GM12878 (cell line): ENCODE measurements at regions of chr1 and their contacts with region 1.

Region 1: GRCh38 chr1:9455487-9456234 is 83.6 kb upstream of the SLC25A33 start:
- DNase-seq: no peak
- ATAC-seq: peak; percentile 94
- H3K4me3 ChIP-seq: no peak overlapping the region
- H3K27ac ChIP-seq: no peak overlapping the region
- H3K4me1 ChIP-seq: no peaks in the 10 kb centered on the region
- H3K27me3 ChIP-seq: no peaks in the 10 kb centered on the region; a peak in 1 of 4 replicates
- CTCF ChIP-seq: peak; percentile 83 to 87 (median 84)
- EP300 ChIP-seq: no peak
- POLR2A ChIP-seq: no peak
- RAD21 ChIP-seq: peak; percentile 91

Region 2: GRCh38 chr1:9270290-9270883 is 185.3 kb before region 1 on chr1:
- CTCF ChIA-PET with region 1: interaction called, 34 read pairs
- POLR2A ChIA-PET with region 1: no interaction called
- RAD21 ChIA-PET with region 1: interaction called, 22 read pairs
- SMC1A ChIA-PET with region 1: interaction called, 8 read pairs
- in situ Hi-C with region 1: no loop called
- intact Hi-C with region 1: no loop called
- DNase-seq: no peak
- ATAC-seq: no peak
- H3K4me3 ChIP-seq: no peak overlapping the region
- H3K27ac ChIP-seq: no peak overlapping the region
- H3K4me1 ChIP-seq: peaks cover 3% of the 10 kb centered on the region; the same call in 1 of the 2 replicates
- H3K27me3 ChIP-seq: no peaks in the 10 kb centered on the region
- CTCF ChIP-seq: no peak
- EP300 ChIP-seq: no peak
- POLR2A ChIP-seq: no peak
- RAD21 ChIP-seq: no peak

Region 3: DNA sequence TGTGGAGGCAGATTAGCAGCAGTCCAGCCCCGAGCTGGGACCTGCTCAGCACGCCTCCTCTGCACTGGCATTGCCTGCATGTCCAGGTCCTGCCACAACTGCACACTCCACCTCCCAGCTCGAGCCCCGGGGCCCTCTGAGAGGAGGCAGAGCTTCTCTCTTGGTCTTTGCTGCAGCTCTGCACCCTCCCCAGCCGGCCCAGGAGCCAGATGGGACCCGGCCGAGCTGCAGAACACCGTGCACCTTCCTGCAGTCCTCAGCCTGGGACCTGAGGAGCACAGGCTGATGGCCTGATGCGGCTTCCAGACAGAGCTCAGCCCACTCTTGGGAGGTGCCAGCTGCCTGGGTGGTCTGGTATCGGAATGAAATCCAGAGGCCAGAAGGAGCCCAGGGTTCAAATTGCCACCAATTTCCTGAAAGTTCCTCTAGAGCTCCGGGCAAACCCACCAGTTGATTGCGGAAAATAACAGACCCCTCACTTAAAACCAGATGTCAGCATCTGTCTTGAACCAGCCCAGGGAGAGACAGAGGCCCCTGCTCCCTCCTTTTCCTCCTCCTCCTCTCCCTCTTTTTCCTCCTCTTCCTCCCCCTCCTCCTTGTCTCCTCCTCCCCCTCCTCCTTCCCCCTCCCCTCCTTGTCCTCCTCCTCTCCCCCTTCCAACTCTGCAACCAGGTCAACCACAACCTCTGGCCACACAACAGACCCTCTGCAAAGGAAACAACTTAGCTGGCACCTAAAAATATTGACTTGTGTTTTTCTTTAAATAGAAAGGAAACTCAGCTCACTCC is 173.6 kb before region 1 on chr1:
- CTCF ChIA-PET with region 1: interaction called, 183 read pairs
- POLR2A ChIA-PET with region 1: no interaction called
- RAD21 ChIA-PET with region 1: interaction called, 5 read pairs
- SMC1A ChIA-PET with region 1: interaction called, 123 read pairs
- in situ Hi-C with region 1: loop called (anchors 5 kb)
- intact Hi-C with region 1: no loop called
- DNase-seq: no peak
- ATAC-seq: peak; percentile 31
- H3K4me3 ChIP-seq: no peak overlapping the region
- H3K27ac ChIP-seq: no peak overlapping the region
- H3K4me1 ChIP-seq: peaks cover 6% of the 10 kb centered on the region
- H3K27me3 ChIP-seq: no peaks in the 10 kb centered on the region
- CTCF ChIP-seq: no peak
- EP300 ChIP-seq: no peak
- POLR2A ChIP-seq: no peak
- RAD21 ChIP-seq: no peak

Region 4: DNA sequence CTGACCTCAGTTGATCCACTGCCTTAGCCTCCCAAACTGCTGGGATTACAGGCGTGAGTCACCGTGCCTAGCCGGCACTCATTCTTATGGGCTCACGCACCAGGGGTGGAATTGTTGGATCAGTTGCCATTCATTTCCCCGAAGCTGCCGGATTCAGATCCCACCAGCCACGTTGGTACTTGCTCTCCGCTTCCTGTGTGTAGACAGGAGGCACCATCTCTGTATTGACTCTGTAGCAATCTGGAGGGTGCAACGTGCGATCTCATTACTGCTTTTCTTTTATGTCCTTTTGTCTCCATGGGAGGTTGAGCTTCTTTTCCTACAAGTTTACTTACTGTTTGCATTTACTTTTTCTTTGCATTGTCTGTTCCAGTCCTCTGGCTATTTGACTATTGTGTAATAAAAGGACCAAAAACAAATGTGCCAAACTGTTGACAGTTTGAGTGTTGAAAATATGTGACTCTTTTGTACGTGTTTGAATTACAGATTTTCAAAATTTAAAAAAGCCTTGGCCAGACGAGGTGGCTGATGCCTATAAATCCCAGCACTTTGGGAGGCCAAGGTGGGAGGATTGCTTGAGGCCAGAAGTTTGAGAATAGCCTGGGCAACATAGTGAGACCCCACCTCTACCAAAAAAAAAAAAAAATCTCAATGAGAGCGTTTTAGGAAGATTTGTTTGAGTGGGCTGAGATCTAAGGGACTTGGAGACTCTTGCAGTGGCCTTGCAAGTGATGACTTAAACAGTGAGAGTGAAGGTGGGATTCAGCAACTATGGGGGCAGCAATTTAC is 123.9 kb before region 1 on chr1:
- CTCF ChIA-PET with region 1: no interaction called
- POLR2A ChIA-PET with region 1: no interaction called
- RAD21 ChIA-PET with region 1: no interaction called
- SMC1A ChIA-PET with region 1: no interaction called
- in situ Hi-C with region 1: no loop called
- intact Hi-C with region 1: no loop called
- DNase-seq: no peak
- ATAC-seq: no peak
- H3K4me3 ChIP-seq: no peak overlapping the region
- H3K27ac ChIP-seq: no peak overlapping the region
- H3K4me1 ChIP-seq: 0 out of 2 replicates have a peak, but pooled peaks cover 3% of the 10 kb centered on the region
- H3K27me3 ChIP-seq: no peaks in the 10 kb centered on the region; a peak in 1 of 4 replicates
- CTCF ChIP-seq: no peak
- EP300 ChIP-seq: no peak
- POLR2A ChIP-seq: no peak
- RAD21 ChIP-seq: no peak

Region 5: DNA sequence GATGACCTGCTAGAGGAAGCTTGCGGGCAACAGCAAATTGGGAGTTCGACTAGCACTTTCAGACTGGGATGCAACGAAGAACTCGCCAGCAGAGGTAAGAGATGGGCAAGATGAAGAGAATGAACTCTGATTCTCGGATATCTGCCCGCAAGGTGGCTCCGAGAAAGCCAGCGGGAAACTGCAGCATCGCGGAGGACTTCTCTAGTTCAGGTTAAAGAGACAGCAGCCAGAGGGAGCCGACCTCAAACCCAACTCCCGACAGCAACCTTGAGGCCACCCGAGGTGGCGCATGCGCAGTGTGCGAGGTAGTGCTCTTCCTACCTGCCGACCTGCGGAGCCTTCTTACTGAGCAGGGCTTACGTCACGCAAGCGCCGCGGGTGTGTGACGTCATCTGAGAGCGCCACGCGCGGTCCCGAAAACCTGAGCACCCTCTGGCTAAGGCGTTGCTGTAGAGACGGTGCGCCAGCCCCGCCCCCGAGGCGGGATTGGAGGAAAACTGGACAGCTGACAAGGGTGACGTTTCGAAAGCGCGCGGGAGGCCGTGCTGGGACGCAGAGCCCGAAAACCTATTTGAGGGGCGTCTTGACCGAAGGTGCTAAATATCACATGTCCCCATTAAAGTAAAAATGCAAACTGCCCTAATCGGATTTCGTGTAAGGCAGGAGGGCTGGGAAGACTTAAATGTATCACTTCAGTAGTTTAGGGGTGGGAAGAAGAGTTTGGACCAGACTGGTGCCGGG is 26.9 kb before region 1 on chr1:
- CTCF ChIA-PET with region 1: interaction called, 8 read pairs
- POLR2A ChIA-PET with region 1: no interaction called
- RAD21 ChIA-PET with region 1: interaction called, 8 read pairs
- SMC1A ChIA-PET with region 1: interaction called, 14 read pairs
- in situ Hi-C with region 1: no loop called
- intact Hi-C with region 1: no loop called
- DNase-seq: peak; percentile 100
- ATAC-seq: peak; percentile 89
- H3K4me3 ChIP-seq: peak overlapping the region; percentile 64
- H3K27ac ChIP-seq: peak overlapping the region; percentile 43
- H3K4me1 ChIP-seq: peaks cover 36% of the 10 kb centered on the region
- H3K27me3 ChIP-seq: no peaks in the 10 kb centered on the region
- CTCF ChIP-seq: peak in 1 of 3 experiments; percentile 4; a peak in 1 of 6 replicates
- EP300 ChIP-seq: no peak
- POLR2A ChIP-seq: peak; percentile 77
- RAD21 ChIP-seq: no peak

Region 6: DNA sequence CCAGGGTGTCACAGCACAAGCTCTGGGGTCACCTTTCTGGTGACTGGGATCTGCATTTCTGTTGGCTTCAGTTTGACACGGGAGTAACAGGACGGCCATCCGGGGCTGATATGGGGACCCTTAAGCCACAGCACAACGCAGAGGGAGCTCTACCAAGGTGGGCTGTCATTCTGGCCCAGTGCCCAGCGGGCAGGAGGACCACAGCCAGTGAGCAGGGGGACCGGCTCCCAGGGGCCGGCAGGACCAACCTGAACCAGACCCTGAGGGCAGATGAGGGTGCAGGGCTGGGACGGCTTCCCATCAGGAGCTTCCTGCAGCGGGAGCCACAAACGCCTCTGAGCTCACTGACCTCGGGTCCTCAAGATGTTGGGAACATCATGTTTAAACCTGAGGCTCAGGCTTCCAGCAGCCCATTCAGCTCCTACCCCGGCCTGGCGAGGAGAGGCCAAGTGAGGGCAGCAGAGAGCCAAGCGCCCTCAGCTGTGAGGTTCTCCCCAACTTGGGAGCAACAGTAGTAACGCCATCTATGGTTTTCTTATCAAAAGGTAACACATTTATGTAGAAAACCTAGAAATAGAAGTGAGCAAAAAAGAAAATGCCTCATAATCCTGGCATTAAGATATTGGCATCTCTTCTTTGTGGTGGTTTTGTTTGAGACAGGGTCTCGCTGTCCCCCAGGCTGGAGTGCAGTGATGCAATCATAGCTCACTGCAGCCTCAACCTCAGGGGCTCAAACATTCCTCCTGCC is 159.8 kb after region 1 on chr1:
- CTCF ChIA-PET with region 1: no interaction called
- POLR2A ChIA-PET with region 1: no interaction called
- RAD21 ChIA-PET with region 1: no interaction called
- SMC1A ChIA-PET with region 1: no interaction called
- in situ Hi-C with region 1: no loop called
- intact Hi-C with region 1: no loop called
- DNase-seq: no peak
- ATAC-seq: peak; percentile 98
- H3K4me3 ChIP-seq: no peak overlapping the region
- H3K27ac ChIP-seq: no peak overlapping the region
- H3K4me1 ChIP-seq: no peaks in the 10 kb centered on the region
- H3K27me3 ChIP-seq: no peaks in the 10 kb centered on the region
- CTCF ChIP-seq: peak; percentile 95 to 96 (median 96)
- EP300 ChIP-seq: no peak
- POLR2A ChIP-seq: no peak
- RAD21 ChIP-seq: peak; percentile 77

Region 7: GRCh38 chr1:9629445-9630201 is 174.0 kb after region 1 on chr1:
- CTCF ChIA-PET with region 1: no interaction called
- POLR2A ChIA-PET with region 1: no interaction called
- RAD21 ChIA-PET with region 1: no interaction called
- SMC1A ChIA-PET with region 1: no interaction called
- in situ Hi-C with region 1: no loop called
- intact Hi-C with region 1: no loop called
- DNase-seq: peak; percentile 71
- ATAC-seq: peak; percentile 45
- H3K4me3 ChIP-seq: peak overlapping the region; percentile 86
- H3K27ac ChIP-seq: peak overlapping the region; percentile 98
- H3K4me1 ChIP-seq: peaks cover 37% of the 10 kb centered on the region
- H3K27me3 ChIP-seq: no peaks in the 10 kb centered on the region
- CTCF ChIP-seq: no peak
- EP300 ChIP-seq: peak; percentile 57 to 64; a peak in 1 of 4 replicates
- POLR2A ChIP-seq: peak; percentile 76
- RAD21 ChIP-seq: no peak